ENCODE measurements at regions of chr6 and their contacts with region 1.

Region 1: DNA sequence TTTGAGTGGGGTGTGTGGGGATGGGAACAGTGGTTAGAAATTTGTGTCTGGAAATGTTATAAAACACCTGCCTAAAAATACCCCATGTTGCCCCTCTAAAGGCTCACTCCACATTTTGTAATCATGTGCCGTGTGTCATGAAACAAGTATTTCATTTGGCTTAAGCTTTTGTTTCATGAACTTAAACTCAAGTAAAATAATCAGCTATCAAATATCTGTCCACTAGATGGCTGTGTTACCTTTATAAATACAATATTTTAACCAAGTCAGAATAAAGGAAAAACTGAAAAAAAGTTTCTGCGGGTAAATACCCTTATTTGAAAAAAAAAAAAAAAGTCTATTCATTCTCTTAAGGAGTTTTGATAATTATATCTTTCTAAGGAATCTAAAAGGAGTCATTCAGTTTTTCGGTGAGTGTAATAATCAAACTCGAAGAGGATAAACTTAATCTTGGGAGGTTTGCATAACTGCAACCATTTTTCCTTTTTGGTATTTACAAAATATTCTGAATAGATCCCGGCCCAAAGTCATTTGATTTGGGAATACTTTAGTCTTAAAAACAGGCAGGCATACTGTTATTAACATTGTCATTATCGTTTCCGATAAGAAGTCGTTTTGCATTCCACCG is 29.9 kb upstream of the MTRF1L start:
- H3K4me3 ChIP-seq: no peak overlapping the region
- H3K27ac ChIP-seq: no peak overlapping the region
- H3K4me1 ChIP-seq: peaks cover 8% of the 10 kb centered on the region; the same call in 1 of the 2 replicates
- CTCF ChIP-seq: no peak

Region 2: DNA sequence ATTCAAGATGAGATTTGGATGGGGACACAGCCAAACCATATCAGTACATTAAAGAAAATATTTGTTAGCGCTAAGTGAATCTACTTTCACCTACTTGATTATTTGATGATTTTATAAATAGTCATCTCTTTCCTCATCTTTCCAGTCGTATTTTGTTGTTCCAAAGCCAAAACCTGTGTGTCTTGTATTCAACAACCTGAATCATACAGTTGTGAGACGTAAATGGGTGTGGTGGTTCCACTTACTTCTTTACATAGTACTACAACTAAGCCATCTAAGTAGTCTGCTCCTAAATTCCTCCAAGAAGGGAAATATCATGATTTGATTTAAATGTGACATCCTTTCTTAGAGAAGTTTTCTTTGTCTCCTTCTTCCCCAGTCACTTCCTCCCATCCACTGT is 1092.1 kb before region 1 on chr6:
- CTCF ChIA-PET with region 1: no interaction called
- POLR2A ChIA-PET with region 1: no interaction called
- H3K4me3 ChIP-seq: no peak overlapping the region
- H3K27ac ChIP-seq: no peak overlapping the region
- H3K4me1 ChIP-seq: no peaks in the 10 kb centered on the region
- CTCF ChIP-seq: no peak

Region 3: GRCh38 chr6:152993431-152993830 is 38.9 kb before region 1 on chr6:
- CTCF ChIA-PET with region 1: no interaction called
- POLR2A ChIA-PET with region 1: no interaction called
- H3K4me3 ChIP-seq: no peak overlapping the region
- H3K27ac ChIP-seq: no peak overlapping the region
- H3K4me1 ChIP-seq: no peaks in the 10 kb centered on the region
- CTCF ChIP-seq: no peak

Region 4: GRCh38 chr6:153012856-153013255 is 19.5 kb before region 1 on chr6:
- CTCF ChIA-PET with region 1: no interaction called
- POLR2A ChIA-PET with region 1: no interaction called
- H3K4me3 ChIP-seq: no peak overlapping the region
- H3K27ac ChIP-seq: no peak overlapping the region
- H3K4me1 ChIP-seq: no peaks in the 10 kb centered on the region
- CTCF ChIP-seq: no peak

Region 5: DNA sequence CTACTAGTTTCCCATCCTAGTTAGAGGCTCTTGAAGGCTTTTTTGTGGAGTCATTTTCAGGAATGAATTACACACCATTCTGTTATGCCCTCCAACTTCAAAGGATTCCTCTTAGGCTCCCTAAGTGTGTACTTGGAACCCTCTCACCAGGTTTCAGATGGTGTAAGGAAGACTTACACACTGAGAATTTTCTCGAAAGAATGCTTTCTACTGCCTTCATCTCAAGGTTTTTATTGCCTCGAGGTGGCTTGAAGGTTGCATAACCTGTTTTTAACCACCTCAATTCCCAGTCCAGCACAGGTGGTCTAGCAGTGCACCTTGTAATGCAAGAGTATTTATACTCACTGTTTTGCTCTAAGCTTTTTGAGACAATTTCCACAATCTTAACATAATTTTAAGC is 210.4 kb after region 1 on chr6:
- CTCF ChIA-PET with region 1: no interaction called
- POLR2A ChIA-PET with region 1: no interaction called
- H3K4me3 ChIP-seq: no peak overlapping the region
- H3K27ac ChIP-seq: no peak overlapping the region
- H3K4me1 ChIP-seq: no peaks in the 10 kb centered on the region
- CTCF ChIP-seq: no peak

Region 6: DNA sequence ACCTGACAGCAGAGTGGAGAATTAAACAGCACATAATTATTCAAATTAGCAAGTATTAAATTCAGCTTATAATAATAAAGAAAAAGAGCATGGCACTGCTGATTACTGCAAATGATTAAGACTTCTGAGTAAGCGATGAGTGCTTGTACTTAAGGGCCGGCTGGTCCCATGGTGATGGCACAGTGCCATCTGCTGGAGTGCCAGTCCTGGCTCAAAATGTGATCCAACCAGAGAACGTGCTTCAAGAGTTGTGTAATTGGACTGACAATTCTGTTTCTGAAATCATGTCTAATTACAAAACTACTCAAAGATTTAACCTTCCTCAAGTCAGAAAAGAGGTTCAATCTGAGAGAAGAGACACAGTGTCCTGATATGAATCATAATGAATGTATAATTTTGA is 280.3 kb after region 1 on chr6:
- CTCF ChIA-PET with region 1: interaction called, 10 read pairs
- POLR2A ChIA-PET with region 1: no interaction called
- H3K4me3 ChIP-seq: no peak overlapping the region
- H3K27ac ChIP-seq: no peak overlapping the region
- H3K4me1 ChIP-seq: no peaks in the 10 kb centered on the region
- CTCF ChIP-seq: peak; percentile 54